ENCODE measurements at regions of chr2 and their contacts with region 1.

Region 1: DNA sequence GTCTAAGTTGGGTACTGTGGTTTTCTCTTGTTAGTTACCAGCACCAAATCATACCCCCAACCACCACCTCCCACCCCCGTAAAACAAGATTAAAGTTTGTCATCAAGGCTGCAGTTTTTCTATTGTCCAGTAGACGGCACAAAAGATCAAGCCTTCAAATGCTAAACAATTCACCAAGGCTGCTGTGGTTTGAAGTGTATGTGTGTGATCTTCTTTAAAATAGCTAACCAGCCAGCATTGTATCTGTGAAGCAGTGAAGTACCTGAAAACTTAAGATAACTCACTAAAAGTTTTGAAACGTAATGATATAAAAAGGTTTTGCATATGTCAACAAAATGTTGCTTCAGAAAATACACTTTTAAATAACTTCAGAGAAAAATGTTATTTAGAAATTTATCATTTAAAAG is 5.9 kb upstream of the MEIS1 start:
- DNase-seq: peak; percentile 74
- H3K4me3 ChIP-seq: no peak overlapping the region
- H3K27ac ChIP-seq: no peak overlapping the region
- H3K4me1 ChIP-seq: peaks cover 9% of the 10 kb centered on the region
- H3K27me3 ChIP-seq: peaks cover 46 to 50% of the 10 kb centered on the region in 2 experiments
- CTCF ChIP-seq: peak; percentile 78
- POLR2A ChIP-seq: no peak

Region 2: DNA sequence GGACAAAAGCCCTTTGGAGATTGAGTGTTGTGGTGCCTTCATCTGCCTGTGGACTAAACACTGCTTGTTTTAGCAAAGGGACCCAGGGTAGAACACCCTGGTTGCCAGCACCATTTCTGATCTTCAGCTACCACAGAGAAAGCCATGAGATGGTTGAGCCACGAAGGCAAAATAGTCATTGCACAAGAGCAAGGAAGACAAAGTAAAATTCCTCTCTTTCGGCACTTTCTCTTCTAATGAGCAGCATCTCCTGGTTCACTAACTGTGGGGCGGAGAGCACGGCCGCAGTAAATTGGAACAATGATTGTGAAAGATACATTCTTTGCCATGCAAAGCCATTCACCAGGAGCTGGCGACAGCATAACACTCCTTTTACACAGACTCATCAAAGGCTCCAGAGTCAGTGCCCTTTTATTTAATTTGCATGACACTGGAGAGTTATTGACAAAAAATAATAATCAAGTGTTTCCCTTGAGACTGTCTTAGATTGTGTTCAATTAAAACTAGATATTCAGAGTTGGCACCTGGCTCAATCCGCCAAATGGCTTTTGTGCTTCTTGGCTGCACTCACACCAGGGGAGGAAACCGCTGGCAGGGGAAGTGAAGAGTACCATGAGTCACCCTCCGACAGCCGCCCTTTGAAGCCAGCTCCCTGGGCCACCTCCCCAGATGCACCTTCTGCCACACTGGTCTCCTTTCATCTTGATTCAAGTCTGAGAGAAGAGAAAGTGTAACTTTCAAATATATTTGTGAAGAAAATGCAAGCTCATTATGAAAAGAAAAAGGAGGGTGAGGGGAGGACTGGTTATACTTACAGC is 94.6 kb before region 1 on chr2:
- CTCF ChIA-PET with region 1: no interaction called
- POLR2A ChIA-PET with region 1: no interaction called
- dilution Hi-C with region 1: no loop called
- intact Hi-C with region 1: no loop called
- DNase-seq: no peak
- H3K4me3 ChIP-seq: no peak overlapping the region
- H3K27ac ChIP-seq: no peak overlapping the region
- H3K4me1 ChIP-seq: no peaks in the 10 kb centered on the region
- H3K27me3 ChIP-seq: no peaks in the 10 kb centered on the region
- CTCF ChIP-seq: no peak
- POLR2A ChIP-seq: no peak

Region 3: GRCh38 chr2:66389651-66390131 is 39.4 kb before region 1 on chr2:
- CTCF ChIA-PET with region 1: no interaction called
- POLR2A ChIA-PET with region 1: no interaction called
- dilution Hi-C with region 1: no loop called
- intact Hi-C with region 1: no loop called
- DNase-seq: no peak
- H3K4me3 ChIP-seq: no peak overlapping the region
- H3K27ac ChIP-seq: no peak overlapping the region
- H3K4me1 ChIP-seq: no peaks in the 10 kb centered on the region
- H3K27me3 ChIP-seq: no peaks in the 10 kb centered on the region
- CTCF ChIP-seq: no peak
- POLR2A ChIP-seq: no peak

Region 4: GRCh38 chr2:66418381-66418780 is 10.7 kb before region 1 on chr2:
- CTCF ChIA-PET with region 1: interaction called, 17 read pairs
- POLR2A ChIA-PET with region 1: no interaction called
- dilution Hi-C with region 1: no loop called
- intact Hi-C with region 1: no loop called
- DNase-seq: no peak
- H3K4me3 ChIP-seq: no peak overlapping the region
- H3K27ac ChIP-seq: no peak overlapping the region
- H3K4me1 ChIP-seq: no peaks in the 10 kb centered on the region
- H3K27me3 ChIP-seq: peaks cover 8 to 22% of the 10 kb centered on the region in 2 experiments
- CTCF ChIP-seq: no peak
- POLR2A ChIP-seq: no peak

Region 5: DNA sequence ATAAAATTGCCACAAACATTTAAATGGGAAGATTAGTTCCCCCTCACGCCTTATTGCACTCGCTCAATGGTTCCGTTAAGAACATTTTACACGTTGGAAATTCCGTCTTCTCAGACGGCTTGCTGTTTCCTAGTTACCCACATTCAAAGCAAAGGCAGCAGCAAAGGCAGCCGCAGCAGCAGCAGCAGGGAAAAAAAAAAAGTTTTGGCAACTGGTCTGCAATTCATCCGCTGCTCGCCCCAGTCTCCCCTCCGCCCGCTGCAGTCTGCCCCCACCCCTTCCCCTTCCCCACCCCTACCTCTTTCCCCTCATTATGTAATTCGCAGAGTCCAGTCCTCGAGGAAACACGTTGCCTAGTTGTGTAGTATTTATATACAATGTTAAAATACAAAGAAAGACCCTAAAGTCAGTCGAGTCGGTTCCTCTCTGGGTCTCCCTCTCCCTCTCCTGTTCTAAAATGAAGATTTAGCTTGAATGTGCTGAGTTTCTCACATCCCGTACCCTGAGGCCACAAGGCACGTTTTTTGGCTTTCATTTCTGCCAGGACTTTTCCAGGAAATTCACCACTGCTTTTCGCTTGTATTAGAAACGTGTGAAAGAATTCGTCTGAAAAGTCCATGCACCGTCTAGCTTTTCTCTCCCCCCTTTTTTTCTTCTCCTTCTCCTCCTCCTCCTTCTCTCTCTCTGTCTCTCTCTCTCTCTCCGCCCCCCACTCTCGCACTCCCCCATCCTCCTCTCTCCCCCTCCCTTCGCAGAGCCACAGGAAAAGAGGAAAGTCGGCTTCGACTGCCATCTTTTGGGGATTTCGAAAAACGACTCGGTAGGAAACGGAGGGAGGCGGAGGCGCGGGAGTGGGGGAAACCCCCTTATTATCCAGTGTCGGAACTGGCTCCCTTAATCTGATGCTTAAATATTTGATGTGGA is 145.9 kb after region 1 on chr2:
- CTCF ChIA-PET with region 1: interaction called, 154 read pairs
- POLR2A ChIA-PET with region 1: interaction called, 16 read pairs
- dilution Hi-C with region 1: no loop called
- intact Hi-C with region 1: loop called (anchors 1 kb)
- DNase-seq: peak; percentile 81
- H3K4me3 ChIP-seq: peak overlapping the region; percentile 56 to 92 (median 85)
- H3K27ac ChIP-seq: peak overlapping the region; percentile 74
- H3K4me1 ChIP-seq: peaks cover 18% of the 10 kb centered on the region
- H3K27me3 ChIP-seq: peaks cover 32 to 38% of the 10 kb centered on the region in 2 experiments
- CTCF ChIP-seq: peak; percentile 45 to 60
- POLR2A ChIP-seq: no peak

Region 6: GRCh38 chr2:66872081-66872985 is 443.3 kb after region 1 on chr2:
- CTCF ChIA-PET with region 1: no interaction called
- POLR2A ChIA-PET with region 1: no interaction called
- dilution Hi-C with region 1: no loop called
- intact Hi-C with region 1: loop called (anchors 5 kb)
- DNase-seq: peak; percentile 72
- H3K4me3 ChIP-seq: no peak overlapping the region
- H3K27ac ChIP-seq: peak overlapping the region; percentile 12
- H3K4me1 ChIP-seq: peaks cover 9% of the 10 kb centered on the region
- H3K27me3 ChIP-seq: no peaks in the 10 kb centered on the region
- CTCF ChIP-seq: no peak
- POLR2A ChIP-seq: no peak

Region 7: DNA sequence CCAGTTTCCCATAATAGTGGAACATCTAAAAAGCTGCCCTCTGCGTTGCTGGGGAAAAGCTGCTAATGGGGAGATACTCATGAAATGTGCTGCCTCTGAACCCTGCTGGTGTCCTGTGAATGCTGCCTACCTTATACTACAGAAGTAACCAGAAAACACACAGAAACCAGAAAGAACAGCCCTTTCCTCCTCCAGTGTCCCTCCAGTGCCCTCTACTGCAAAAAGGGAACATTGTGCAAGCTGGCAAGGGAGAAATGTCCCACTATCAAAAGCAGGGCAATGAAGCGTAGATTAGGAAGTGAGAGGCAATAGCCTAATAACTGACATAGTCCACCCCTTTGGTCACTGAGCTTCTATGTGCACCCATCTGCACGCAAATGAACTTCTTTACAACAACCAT is 805.4 kb after region 1 on chr2:
- CTCF ChIA-PET with region 1: interaction called, 10 read pairs
- POLR2A ChIA-PET with region 1: no interaction called
- dilution Hi-C with region 1: no loop called
- intact Hi-C with region 1: no loop called
- DNase-seq: peak; percentile 26
- H3K4me3 ChIP-seq: no peak overlapping the region
- H3K27ac ChIP-seq: no peak overlapping the region
- H3K4me1 ChIP-seq: no peaks in the 10 kb centered on the region
- H3K27me3 ChIP-seq: no peaks in the 10 kb centered on the region
- CTCF ChIP-seq: peak; percentile 8 to 45
- POLR2A ChIP-seq: no peak

Region 8: DNA sequence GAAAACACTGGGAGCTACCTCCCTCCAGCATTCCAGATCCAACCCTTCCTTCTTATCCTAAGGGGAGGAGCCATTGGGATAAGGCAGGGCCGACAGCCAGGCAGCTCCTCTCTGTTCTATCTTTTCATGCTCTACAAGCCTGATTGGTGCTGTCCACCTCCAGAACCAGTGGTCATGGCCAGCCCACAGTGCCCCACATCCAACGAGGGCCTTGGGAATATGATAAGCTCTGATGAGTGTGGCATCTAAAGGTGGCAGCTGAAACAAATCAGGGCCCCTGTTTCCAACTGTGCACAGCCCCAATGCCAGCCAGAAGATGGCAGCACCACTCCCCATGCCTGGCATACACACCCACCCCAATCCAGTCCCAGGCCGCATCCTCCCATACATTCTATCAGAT is 1304.4 kb after region 1 on chr2:
- CTCF ChIA-PET with region 1: interaction called, 3 read pairs
- POLR2A ChIA-PET with region 1: no interaction called
- dilution Hi-C with region 1: no loop called
- intact Hi-C with region 1: loop called (anchors 1 kb)
- DNase-seq: peak; percentile 55
- H3K4me3 ChIP-seq: no peak overlapping the region
- H3K27ac ChIP-seq: no peak overlapping the region
- H3K4me1 ChIP-seq: no peaks in the 10 kb centered on the region
- H3K27me3 ChIP-seq: no peaks in the 10 kb centered on the region
- CTCF ChIP-seq: peak; percentile 32 to 82
- POLR2A ChIP-seq: no peak